ENCODE measurements at regions of chr10 and their contacts with region 1.

Region 1: GRCh38 chr10:128150045-128150493 is 23.8 kb upstream of the MKI67 start:
- DNase-seq: no peak
- H3K4me3 ChIP-seq: peak overlapping the region; percentile 33 to 61 (median 49)
- H3K27ac ChIP-seq: no peak overlapping the region
- H3K4me1 ChIP-seq: no peaks in the 10 kb centered on the region
- H3K27me3 ChIP-seq: no peaks in the 10 kb centered on the region
- CTCF ChIP-seq: peak; percentile 52 to 75 (median 58)
- POLR2A ChIP-seq: no peak

Region 2: GRCh38 chr10:126454045-126454751 is 1695.9 kb before region 1 on chr10:
- intact Hi-C with region 1: loop called (anchors 5 kb)
- DNase-seq: no peak
- H3K4me3 ChIP-seq: no peak overlapping the region
- H3K27ac ChIP-seq: no peak overlapping the region
- H3K4me1 ChIP-seq: no peaks in the 10 kb centered on the region
- H3K27me3 ChIP-seq: no peaks in the 10 kb centered on the region
- CTCF ChIP-seq: no peak
- POLR2A ChIP-seq: no peak

Region 3: GRCh38 chr10:127175357-127176110 is 974.5 kb before region 1 on chr10:
- intact Hi-C with region 1: no loop called
- DNase-seq: no peak
- H3K4me3 ChIP-seq: no peak overlapping the region
- H3K27ac ChIP-seq: no peak overlapping the region
- H3K4me1 ChIP-seq: no peaks in the 10 kb centered on the region
- H3K27me3 ChIP-seq: no peaks in the 10 kb centered on the region
- CTCF ChIP-seq: no peak
- POLR2A ChIP-seq: no peak

Region 4: DNA sequence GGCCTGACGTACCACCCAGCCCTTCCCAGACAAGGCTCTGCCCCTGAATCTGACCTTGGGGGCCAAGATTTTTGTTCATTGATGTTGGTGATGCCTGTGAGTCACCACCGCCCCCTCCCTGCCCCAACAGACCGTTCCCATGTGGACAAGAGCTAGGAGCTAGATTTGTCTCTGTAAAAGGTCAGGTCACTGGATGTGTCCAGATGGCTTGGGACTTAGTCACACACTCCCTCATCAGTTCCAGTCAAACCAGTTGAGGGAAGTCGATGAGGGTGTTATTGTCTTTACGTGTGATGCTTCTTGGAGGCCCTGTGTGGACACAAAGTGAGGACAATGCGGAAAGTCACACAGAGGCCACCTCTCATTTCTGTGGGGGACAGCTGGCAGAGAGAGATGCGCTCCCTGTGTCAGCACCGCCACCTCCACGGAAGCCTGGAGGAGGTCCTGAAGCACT is 241.3 kb before region 1 on chr10:
- intact Hi-C with region 1: no loop called
- DNase-seq: no peak
- H3K4me3 ChIP-seq: peak overlapping the region in 1 of 3 donors; percentile 84
- H3K27ac ChIP-seq: peak overlapping the region; percentile 83 to 93
- H3K4me1 ChIP-seq: peaks cover 5 to 9% of the 10 kb centered on the region in 2 donors
- H3K27me3 ChIP-seq: no peaks in the 10 kb centered on the region
- CTCF ChIP-seq: no peak
- POLR2A ChIP-seq: no peak

Region 5: DNA sequence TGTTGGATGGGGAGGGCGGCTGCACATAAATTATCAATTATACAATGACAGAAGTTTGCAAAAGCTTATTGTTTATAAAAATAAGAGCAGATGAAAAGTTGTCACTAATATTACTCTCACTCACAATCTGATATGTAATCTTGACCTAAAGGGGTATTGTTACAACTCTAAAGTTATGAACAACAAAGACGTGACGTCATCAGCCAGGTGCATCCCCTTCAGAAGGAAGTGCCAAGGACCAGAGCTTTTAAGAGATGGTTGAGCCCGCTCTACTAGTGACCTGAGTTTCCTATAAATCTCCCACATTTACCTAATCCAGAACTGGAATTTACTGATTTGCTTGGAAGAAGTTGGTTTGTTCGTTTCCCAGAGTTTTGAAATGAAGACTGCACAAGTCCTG is 1069.3 kb after region 1 on chr10:
- intact Hi-C with region 1: no loop called
- DNase-seq: no peak
- H3K4me3 ChIP-seq: no peak overlapping the region
- H3K27ac ChIP-seq: no peak overlapping the region
- H3K4me1 ChIP-seq: no peaks in the 10 kb centered on the region
- H3K27me3 ChIP-seq: no peaks in the 10 kb centered on the region
- CTCF ChIP-seq: no peak
- POLR2A ChIP-seq: no peak